ENCODE measurements at regions of chr7 and their contacts with region 1.

Region 1: DNA sequence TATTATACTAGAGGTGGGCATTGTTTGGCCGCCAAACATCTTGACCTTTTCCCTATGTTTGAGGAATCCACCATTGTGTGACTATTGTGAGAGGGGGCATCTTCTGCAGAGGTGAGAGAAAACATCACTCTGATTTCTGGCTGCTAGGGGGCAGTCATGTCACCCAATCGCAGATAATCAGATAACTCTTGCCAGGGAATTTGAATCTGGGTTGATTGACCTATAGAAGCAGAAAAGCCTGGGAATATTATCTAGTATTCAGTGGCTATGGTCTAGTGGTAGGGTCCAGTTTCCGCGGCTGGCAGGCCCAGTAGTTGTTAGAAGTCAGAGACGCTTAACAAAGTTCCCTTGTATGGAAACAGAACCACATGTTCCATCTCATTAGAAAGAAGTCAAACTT is 808.5 kb downstream of the PHTF2 start:
- DNase-seq: no peak
- H3K4me3 ChIP-seq: no peak overlapping the region
- H3K27ac ChIP-seq: no peak overlapping the region
- H3K4me1 ChIP-seq: no peaks in the 10 kb centered on the region
- H3K27me3 ChIP-seq: no peaks in the 10 kb centered on the region
- CTCF ChIP-seq: no peak
- POLR2A ChIP-seq: no peak

Region 2: DNA sequence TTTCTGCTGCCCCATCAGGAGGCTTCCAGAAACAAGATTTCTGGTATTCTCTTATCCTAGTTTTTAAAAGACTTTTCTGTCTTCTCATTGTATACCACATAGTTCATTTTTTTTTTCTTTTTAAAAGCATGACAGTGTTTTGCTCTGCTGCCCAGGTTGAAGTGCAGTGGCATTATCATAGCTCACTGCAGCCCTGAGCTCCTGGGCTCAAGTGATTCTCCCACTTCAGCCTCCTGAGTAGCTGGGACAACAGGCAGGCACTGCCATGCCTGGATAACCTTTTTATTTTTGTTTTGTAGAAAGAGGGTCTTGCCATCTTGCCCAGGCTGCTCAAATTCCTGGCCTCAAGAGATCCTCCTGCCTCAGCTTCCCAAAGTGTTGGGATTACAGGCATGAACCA is 88.7 kb after region 1 on chr7:
- intact Hi-C with region 1: loop called in 1 of 2 experiments (anchors 5 kb)
- DNase-seq: no peak
- H3K4me3 ChIP-seq: no peak overlapping the region
- H3K27ac ChIP-seq: no peak overlapping the region
- H3K4me1 ChIP-seq: no peaks in the 10 kb centered on the region
- H3K27me3 ChIP-seq: no peaks in the 10 kb centered on the region
- CTCF ChIP-seq: no peak
- POLR2A ChIP-seq: no peak